ENCODE measurements at regions of chr10 and their contacts with region 1.

Region 1: DNA sequence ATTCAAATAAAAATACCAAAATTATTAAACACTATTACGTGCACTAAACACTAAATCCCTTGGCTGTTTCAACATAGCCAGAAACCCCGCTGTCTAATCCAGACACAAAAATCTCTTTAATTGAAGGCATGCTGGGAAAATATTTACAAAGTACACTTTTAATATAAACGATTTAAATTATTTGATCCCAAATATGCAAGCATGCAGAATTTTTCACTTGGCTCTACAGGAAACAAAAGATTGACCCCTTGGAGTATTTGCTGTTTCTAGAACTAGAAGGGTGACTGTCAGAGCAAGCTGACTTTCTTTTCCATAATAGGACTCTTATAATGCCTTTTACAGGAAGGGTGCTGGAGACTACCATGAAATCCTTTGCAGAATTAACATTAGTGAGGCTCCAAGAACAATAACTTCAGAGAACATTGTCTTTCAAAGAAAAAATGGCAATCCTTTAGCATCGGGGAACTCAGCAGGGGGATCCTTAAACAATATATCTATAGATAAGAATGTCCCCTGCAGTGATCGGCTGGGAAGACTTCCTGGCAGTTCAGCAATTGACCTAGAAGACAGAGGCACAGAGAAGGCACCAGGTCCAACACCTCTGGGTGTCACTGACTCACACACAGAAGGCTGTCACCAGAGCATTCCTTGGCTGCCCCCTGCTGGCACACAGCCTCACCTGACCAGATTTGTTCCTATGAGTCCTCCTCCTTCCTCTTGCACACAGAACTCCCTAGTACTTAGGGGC is 55.8 kb upstream of the MRLN start:
- DNase-seq: no peak
- H3K4me3 ChIP-seq: no peak overlapping the region
- H3K27ac ChIP-seq: peak overlapping the region in 3 of 4 donors; percentile 12 to 42 (median 28)
- H3K4me1 ChIP-seq: peaks cover 0 to 15% (median 0%) of the 10 kb centered on the region in 3 donors
- H3K27me3 ChIP-seq: no peaks in the 10 kb centered on the region
- CTCF ChIP-seq: peak; percentile 43 to 80 (median 58)
- POLR2A ChIP-seq: no peak

Region 2: DNA sequence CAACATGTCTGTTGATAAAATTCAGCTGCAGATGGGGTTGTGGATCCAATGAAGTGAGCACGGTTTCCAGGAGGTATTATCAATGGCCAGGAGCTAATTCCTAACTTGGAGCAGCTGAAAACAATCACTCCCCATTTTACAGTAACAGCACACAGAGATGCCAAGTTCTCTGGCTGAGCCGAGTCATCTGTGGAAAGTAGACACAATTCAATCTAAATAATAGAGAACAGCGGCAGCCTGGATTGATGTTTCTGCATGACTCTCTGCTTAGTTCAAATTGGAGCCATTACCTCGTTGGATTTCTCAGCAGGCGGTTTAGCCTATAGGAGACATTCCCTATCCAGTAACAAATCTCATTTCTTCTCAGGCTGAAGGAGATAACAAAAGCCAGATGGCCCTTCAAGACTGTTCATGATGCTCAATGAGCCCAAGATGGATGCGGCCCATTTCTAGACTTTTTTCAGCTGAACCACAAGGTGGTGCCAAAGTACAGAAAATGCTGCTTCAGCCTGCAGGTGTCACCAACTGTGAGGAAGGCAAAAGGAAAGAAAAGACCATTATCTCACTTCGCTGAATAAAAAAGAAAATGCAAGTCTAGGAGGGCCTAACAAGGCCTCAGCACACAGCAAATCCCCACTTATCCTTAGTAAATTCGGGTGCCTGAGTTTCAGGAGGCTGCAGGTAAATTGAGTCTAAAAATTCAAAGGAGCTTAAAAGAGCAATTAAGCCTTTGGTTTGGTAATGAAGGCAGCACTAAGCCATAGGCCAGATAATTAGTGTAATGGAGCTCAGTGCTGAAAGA is 183.1 kb before region 1 on chr10:
- intact Hi-C with region 1: loop called (anchors 5 kb)
- DNase-seq: no peak
- H3K4me3 ChIP-seq: no peak overlapping the region
- H3K27ac ChIP-seq: no peak overlapping the region
- H3K4me1 ChIP-seq: peaks cover 0 to 14% (median 3%) of the 10 kb centered on the region in 3 donors
- H3K27me3 ChIP-seq: no peaks in the 10 kb centered on the region
- CTCF ChIP-seq: peak; percentile 68 to 91 (median 82)
- POLR2A ChIP-seq: no peak

Region 3: DNA sequence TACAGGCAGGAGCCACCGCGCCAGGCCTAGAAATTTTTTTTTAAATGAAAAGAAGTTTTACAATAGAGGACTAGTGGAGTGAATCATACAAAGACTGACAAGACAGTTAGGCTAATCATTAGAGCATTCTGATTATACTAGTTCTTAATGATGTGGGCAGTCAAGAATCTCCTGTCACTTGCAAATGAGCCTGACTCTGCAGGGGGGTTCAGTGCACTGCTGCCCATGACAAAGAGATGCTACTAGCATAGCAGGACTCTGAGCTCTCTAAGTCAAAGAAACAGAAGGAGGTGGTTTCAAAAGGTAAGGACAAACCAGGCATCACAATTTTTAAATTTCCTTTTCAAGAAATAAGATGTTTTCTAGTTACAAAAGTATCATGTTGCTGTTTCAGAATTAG is 38.3 kb after region 1 on chr10:
- intact Hi-C with region 1: no loop called
- DNase-seq: no peak
- H3K4me3 ChIP-seq: no peak overlapping the region
- H3K27ac ChIP-seq: no peak overlapping the region
- H3K4me1 ChIP-seq: peaks cover 0 to 38% (median 0%) of the 10 kb centered on the region in 3 donors
- H3K27me3 ChIP-seq: no peaks in the 10 kb centered on the region
- CTCF ChIP-seq: no peak
- POLR2A ChIP-seq: no peak

Region 4: GRCh38 chr10:59960751-59961150 is 151.7 kb after region 1 on chr10:
- intact Hi-C with region 1: no loop called
- DNase-seq: no peak
- H3K4me3 ChIP-seq: no peak overlapping the region
- H3K27ac ChIP-seq: no peak overlapping the region
- H3K4me1 ChIP-seq: peaks cover 6 to 34% (median 7%) of the 10 kb centered on the region in 3 donors
- H3K27me3 ChIP-seq: no peaks in the 10 kb centered on the region
- CTCF ChIP-seq: no peak
- POLR2A ChIP-seq: no peak

Region 5: GRCh38 chr10:61503051-61503450 is 1694.0 kb after region 1 on chr10:
- intact Hi-C with region 1: no loop called
- DNase-seq: no peak
- H3K4me3 ChIP-seq: no peak overlapping the region
- H3K27ac ChIP-seq: no peak overlapping the region
- H3K4me1 ChIP-seq: no peaks in the 10 kb centered on the region
- H3K27me3 ChIP-seq: no peaks in the 10 kb centered on the region
- CTCF ChIP-seq: no peak
- POLR2A ChIP-seq: no peak